Activated CD4-positive, alpha-beta memory T cell treated with anti-CD3 and anti-CD28 coated beads for 36 hours (primary cell): ENCODE measurements at regions of chr3 and their contacts with region 1.

Region 1: DNA sequence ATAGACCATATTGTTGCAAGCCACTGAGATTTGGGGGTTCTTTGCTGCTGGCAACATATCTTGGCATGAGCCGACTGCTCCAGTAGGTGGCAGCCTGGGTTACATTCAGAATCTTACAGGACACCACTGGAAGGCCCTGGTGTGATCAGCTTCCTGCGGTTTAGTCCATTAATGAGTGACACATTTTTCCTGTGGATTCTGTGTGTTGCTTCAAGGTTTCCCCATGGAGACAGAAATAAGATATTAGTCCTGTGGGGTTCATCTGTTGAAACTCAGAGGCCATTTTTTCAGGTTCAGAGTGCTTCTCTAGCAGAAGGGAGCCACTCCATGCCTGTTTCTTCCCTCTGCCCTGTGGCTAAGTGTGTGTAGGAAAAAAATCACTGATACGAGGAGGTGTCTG is 116.2 kb downstream of the MFSD1 start:
- DNase-seq: peak; percentile 25
- H3K4me3 Mint-ChIP-seq: no peak overlapping the region
- H3K27ac Mint-ChIP-seq: no peak overlapping the region
- H3K4me1 Mint-ChIP-seq: no peaks in the 10 kb centered on the region
- H3K27me3 Mint-ChIP-seq: no peaks in the 10 kb centered on the region

Region 2: GRCh38 chr3:158859362-158859761 is 58.6 kb before region 1 on chr3:
- CTCF ChIA-PET with region 1: no interaction called
- POLR2A ChIA-PET with region 1: no interaction called
- intact Hi-C with region 1: no loop called
- DNase-seq: no peak
- H3K4me3 Mint-ChIP-seq: no peak overlapping the region
- H3K27ac Mint-ChIP-seq: no peak overlapping the region
- H3K4me1 Mint-ChIP-seq: no peaks in the 10 kb centered on the region
- H3K27me3 Mint-ChIP-seq: no peaks in the 10 kb centered on the region

Region 3: DNA sequence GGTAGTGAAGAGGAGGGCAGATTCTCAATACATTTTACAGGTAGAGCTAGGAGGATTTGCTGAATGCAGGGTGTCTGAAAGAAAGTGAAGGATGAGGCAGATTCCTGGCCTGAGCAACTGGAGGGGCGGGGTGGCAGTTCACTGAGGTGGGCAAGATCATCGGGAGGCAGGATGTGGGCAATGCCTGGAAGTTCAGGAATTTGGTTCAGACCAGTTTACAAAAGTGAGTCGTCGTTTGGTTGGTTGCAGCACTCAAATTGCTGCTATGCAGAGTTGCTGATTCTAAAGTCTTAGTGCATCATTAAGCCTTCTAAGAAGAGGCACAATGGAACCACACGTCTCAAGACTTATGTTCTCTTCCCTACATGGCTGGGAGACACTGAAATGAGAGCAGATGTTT is 17.8 kb after region 1 on chr3:
- CTCF ChIA-PET with region 1: no interaction called
- POLR2A ChIA-PET with region 1: no interaction called
- intact Hi-C with region 1: no loop called
- DNase-seq: no peak
- H3K4me3 Mint-ChIP-seq: no peak overlapping the region
- H3K27ac Mint-ChIP-seq: no peak overlapping the region
- H3K4me1 Mint-ChIP-seq: no peaks in the 10 kb centered on the region
- H3K27me3 Mint-ChIP-seq: peaks cover 4% of the 10 kb centered on the region

Region 4: DNA sequence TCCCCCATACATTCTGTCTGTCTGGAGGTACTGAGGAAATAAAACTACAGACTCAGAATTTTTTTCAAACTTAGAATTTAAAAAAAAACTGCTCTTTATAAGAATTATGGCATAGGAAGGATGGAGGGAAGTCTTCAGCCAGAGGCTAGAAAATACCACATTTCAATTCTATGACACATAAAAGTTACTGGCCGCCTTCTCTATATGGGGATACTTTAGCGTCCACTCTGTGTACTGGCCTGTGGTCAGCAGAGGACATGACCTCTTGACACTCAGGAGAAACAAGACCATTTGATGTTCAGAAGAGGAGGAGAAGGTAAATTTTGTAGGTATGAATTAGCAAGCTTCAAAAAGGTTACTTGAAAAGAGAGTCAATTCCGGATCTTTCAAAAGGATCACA is 301.2 kb after region 1 on chr3:
- CTCF ChIA-PET with region 1: no interaction called
- POLR2A ChIA-PET with region 1: no interaction called
- intact Hi-C with region 1: no loop called
- DNase-seq: no peak
- H3K4me3 Mint-ChIP-seq: no peak overlapping the region
- H3K27ac Mint-ChIP-seq: no peak overlapping the region
- H3K4me1 Mint-ChIP-seq: no peaks in the 10 kb centered on the region
- H3K27me3 Mint-ChIP-seq: no peaks in the 10 kb centered on the region

Region 5: DNA sequence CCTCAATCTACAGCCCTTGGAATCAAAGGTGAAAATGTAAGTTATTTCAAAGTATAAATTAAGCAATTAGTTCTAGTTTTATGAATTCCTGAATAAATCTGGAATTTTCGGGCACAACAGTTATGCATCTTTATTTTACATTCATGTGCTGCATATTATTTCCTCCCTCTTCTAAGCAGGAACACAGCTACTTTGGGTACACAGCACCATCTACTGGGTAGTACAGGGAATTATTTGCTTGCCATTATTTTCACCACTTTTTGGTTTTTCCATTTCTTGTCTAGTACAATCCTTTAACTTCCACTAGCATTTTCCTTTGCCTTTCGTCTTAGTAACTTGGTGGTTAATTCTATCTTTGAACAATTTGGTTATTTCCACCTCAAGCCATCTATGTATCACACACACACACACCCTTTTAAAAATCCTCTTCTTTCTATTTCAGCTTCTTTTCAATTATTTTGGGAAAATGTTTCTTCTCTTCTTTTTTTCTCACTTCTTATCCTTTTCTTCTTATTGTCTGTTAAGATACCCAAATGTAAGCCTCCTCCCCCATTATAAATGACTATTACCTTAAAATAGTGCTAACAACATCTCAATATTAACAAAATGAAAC is 334.9 kb after region 1 on chr3:
- CTCF ChIA-PET with region 1: no interaction called
- POLR2A ChIA-PET with region 1: no interaction called
- intact Hi-C with region 1: loop called (anchors 2 kb)
- DNase-seq: no peak
- H3K4me3 Mint-ChIP-seq: no peak overlapping the region
- H3K27ac Mint-ChIP-seq: no peak overlapping the region
- H3K4me1 Mint-ChIP-seq: no peaks in the 10 kb centered on the region
- H3K27me3 Mint-ChIP-seq: peaks cover 4% of the 10 kb centered on the region